AG04449 (cell line): ENCODE measurements at regions of chr19 and their contacts with region 1.

Region 1: GRCh38 chr19:49106648-49107135 is 7.5 kb upstream of the LIN7B start:
- DNase-seq: no peak
- H3K4me3 ChIP-seq: no peak overlapping the region
- CTCF ChIP-seq: peak; percentile 84

Region 2: GRCh38 chr19:49118565-49119410 is 12.1 kb after region 1 on chr19 and contains the start of gene C19orf73:
- CTCF ChIA-PET with region 1: interaction called, 26 read pairs
- POLR2A ChIA-PET with region 1: interaction called, 3 read pairs
- DNase-seq: peak; percentile 33
- H3K4me3 ChIP-seq: peak within 1 kb of the TSS; percentile 77
- CTCF ChIP-seq: peak; percentile 6

Region 3: DNA sequence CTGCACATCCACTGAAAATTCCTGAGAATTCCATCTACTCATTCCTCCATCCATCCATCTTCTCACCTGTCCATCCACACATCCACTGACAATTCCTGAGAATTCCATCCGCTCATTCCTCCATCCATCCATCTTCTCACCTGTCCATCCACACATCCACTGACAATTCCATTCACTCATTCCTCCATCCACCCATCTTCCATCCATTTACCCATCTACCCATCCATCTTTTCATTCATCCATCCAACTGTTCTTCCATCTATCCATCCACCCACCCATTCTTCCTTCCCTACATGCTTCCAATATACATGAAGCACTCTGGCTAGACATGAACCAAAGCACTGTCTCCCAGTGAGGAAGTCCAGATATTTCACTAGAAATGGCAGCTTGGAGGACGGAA is 66.5 kb after region 1 on chr19:
- CTCF ChIA-PET with region 1: no interaction called
- POLR2A ChIA-PET with region 1: no interaction called
- DNase-seq: no peak
- H3K4me3 ChIP-seq: no peak overlapping the region
- CTCF ChIP-seq: no peak

Region 4: GRCh38 chr19:49210108-49210900 is 103.6 kb after region 1 on chr19:
- CTCF ChIA-PET with region 1: interaction called, 12 read pairs
- POLR2A ChIA-PET with region 1: no interaction called
- DNase-seq: no peak
- H3K4me3 ChIP-seq: no peak overlapping the region
- CTCF ChIP-seq: no peak